ENCODE measurements at regions of chr12 and their contacts with region 1.

Region 1: DNA sequence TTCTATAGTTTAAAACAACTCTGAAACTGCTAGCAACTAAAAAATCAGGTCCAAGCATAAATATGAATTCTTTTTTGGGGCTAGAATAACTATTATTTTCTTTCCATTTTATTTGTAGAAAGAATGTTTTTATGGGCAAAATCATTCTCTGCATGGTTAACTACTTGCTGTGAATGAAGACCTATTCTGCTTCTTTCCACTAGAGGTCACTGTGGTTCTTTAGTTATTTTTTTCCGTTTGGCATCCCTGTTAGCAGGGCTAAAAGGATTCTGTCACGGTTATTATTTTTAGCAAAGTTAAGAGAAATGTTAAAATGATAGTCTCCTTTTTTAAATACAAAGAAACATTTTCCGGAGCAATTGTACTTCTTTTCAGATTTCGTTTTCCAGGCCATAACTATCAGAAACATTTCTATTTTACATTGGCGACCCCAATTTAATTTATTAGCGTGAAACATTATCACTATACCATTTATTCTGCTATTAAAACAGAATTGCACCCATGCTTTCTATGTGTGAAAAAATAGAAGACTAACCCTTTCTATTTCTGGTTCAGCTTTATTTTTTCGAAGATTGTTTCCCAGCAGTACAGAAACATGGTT is 404.8 kb downstream of the ATP23 start:
- DNase-seq: peak; percentile 58
- H3K4me3 ChIP-seq: no peak overlapping the region
- H3K27ac ChIP-seq: no peak overlapping the region
- H3K4me1 ChIP-seq: peaks cover 22% of the 10 kb centered on the region
- H3K27me3 ChIP-seq: no peaks in the 10 kb centered on the region
- CTCF ChIP-seq: peak; percentile 34 to 47
- POLR2A ChIP-seq: no peak

Region 2: DNA sequence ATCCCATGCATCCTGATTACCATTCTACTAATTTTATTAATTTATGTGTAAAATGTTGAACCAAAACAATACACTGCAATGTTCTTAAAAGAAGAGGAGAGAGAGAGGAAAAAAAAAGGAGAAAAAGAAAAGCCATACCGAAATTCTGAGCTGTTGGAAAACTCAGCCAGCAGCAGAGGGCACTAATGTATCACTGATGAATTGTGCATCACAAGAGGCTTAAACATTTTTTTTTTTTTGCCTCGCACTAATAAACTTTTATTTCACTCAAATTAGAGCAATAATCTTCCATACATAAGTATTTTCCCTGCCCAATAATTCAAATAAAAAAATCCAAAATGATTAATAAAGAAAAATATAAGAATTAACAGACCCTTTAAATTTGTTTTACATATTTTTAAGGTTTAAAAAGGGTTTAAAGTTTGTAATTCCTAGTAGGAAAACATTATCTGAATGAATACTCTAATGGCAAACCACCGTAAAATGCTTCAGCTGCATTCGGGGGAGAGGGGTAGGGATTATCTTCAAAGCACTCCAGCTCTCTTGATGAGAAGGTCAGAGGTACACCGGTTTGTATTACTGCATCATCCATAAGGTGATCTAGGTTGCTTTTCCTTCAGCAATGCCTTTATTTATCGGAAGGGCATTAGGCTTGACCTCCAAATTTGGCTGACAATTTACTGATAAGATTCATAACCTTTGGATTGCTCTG is 362.8 kb before region 1 on chr12:
- CTCF ChIA-PET with region 1: interaction called, 4 read pairs
- POLR2A ChIA-PET with region 1: no interaction called
- dilution Hi-C with region 1: no loop called
- intact Hi-C with region 1: loop called (anchors 1 kb)
- DNase-seq: peak; percentile 72
- H3K4me3 ChIP-seq: no peak overlapping the region
- H3K27ac ChIP-seq: no peak overlapping the region
- H3K4me1 ChIP-seq: no peaks in the 10 kb centered on the region
- H3K27me3 ChIP-seq: peaks cover 0 to 3% of the 10 kb centered on the region in 2 experiments
- CTCF ChIP-seq: peak; percentile 25 to 55
- POLR2A ChIP-seq: no peak

Region 3: GRCh38 chr12:58268069-58268468 is 78.1 kb before region 1 on chr12:
- CTCF ChIA-PET with region 1: no interaction called
- POLR2A ChIA-PET with region 1: no interaction called
- dilution Hi-C with region 1: no loop called
- intact Hi-C with region 1: loop called (anchors 1 kb)
- DNase-seq: peak; percentile 87
- H3K4me3 ChIP-seq: no peak overlapping the region
- H3K27ac ChIP-seq: peak overlapping the region; percentile 66
- H3K4me1 ChIP-seq: peaks cover 18% of the 10 kb centered on the region
- H3K27me3 ChIP-seq: no peaks in the 10 kb centered on the region
- CTCF ChIP-seq: no peak
- POLR2A ChIP-seq: peak; percentile 33

Region 4: DNA sequence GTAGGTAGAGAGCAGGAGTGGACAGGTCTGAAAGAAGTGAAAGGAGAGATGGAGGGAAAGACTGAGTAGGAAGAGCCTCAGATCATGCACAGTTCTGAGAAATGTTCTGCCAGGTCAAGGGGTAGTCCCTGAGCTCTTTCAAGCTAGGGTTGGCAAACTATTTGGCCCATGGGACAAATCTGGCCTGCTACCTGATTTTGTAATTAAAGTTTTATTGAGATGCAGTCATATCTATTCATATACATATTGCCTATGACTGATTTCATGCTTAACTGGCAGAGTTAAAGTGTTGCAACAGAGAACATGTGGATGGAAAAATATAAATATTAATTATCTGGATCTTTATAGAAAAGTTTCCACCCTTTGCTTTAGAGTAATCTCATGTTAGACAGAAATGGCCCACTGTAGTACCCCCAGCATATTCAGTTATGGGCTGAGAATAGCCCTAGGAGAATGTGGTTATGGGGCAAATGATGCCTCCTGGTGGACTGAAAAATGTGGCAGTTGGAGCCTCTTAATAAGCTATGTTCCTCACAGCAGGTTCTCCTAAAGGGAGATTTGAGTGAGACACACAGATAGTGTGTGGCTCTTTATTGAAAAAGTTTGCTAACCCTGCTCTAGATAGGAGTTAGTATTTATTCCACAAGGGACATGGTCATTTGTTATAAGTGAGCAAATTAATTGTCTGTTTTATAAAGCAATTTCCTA is 97.3 kb after region 1 on chr12:
- CTCF ChIA-PET with region 1: interaction called, 122 read pairs
- POLR2A ChIA-PET with region 1: no interaction called
- dilution Hi-C with region 1: no loop called
- intact Hi-C with region 1: loop called (anchors 1 kb)
- DNase-seq: peak; percentile 64
- H3K4me3 ChIP-seq: no peak overlapping the region
- H3K27ac ChIP-seq: no peak overlapping the region
- H3K4me1 ChIP-seq: no peaks in the 10 kb centered on the region
- H3K27me3 ChIP-seq: no peaks in the 10 kb centered on the region
- CTCF ChIP-seq: peak; percentile 49 to 54
- POLR2A ChIP-seq: no peak

Region 5: GRCh38 chr12:58877242-58877743 is 531.2 kb after region 1 on chr12:
- CTCF ChIA-PET with region 1: no interaction called
- POLR2A ChIA-PET with region 1: no interaction called
- dilution Hi-C with region 1: no loop called
- intact Hi-C with region 1: loop called (anchors 5 kb)
- DNase-seq: no peak
- H3K4me3 ChIP-seq: no peak overlapping the region
- H3K27ac ChIP-seq: no peak overlapping the region
- H3K4me1 ChIP-seq: no peaks in the 10 kb centered on the region
- H3K27me3 ChIP-seq: no peaks in the 10 kb centered on the region
- CTCF ChIP-seq: no peak
- POLR2A ChIP-seq: no peak

Region 6: GRCh38 chr12:59149997-59150642 is 804.0 kb after region 1 on chr12:
- CTCF ChIA-PET with region 1: interaction called, 7 read pairs
- POLR2A ChIA-PET with region 1: no interaction called
- dilution Hi-C with region 1: no loop called
- intact Hi-C with region 1: loop called (anchors 1 kb)
- DNase-seq: peak; percentile 89
- H3K4me3 ChIP-seq: no peak overlapping the region
- H3K27ac ChIP-seq: no peak overlapping the region
- H3K4me1 ChIP-seq: no peaks in the 10 kb centered on the region
- H3K27me3 ChIP-seq: peaks cover 0 to 2% of the 10 kb centered on the region in 2 experiments
- CTCF ChIP-seq: peak; percentile 79 to 83
- POLR2A ChIP-seq: no peak